ENCODE measurements at regions of chr13 and their contacts with region 1.

Region 1: GRCh38 chr13:60431108-60431700 is 34.2 kb downstream of the TDRD3 start:
- DNase-seq: no peak
- H3K4me3 Mint-ChIP-seq: no peak overlapping the region
- H3K27ac Mint-ChIP-seq: no peak overlapping the region
- H3K4me1 Mint-ChIP-seq: peaks cover 17% of the 10 kb centered on the region
- H3K27me3 Mint-ChIP-seq: no peaks in the 10 kb centered on the region

Region 2: DNA sequence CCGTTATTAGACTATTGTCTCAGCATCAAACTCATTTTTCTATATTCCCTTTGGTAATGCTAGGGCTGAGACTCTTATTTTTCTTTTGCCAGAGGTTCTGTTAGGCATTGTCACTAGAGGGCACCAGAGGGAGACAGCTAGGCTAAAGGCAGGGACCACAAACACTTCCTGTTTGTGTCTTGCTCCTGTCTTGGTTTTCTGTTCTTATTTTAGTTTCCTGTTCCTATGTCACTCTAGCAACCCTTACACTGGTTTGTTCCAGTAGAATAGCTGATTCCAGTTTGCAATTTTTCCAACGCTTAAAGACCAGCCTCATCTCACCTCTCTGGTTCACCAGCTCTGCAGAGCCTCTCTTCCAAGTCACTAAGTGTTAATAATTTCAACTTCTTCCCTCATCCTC is 1039.5 kb before region 1 on chr13:
- intact Hi-C with region 1: loop called (anchors 1 kb)
- DNase-seq: peak; percentile 49
- H3K4me3 Mint-ChIP-seq: no peak overlapping the region
- H3K27ac Mint-ChIP-seq: no peak overlapping the region
- H3K4me1 Mint-ChIP-seq: no peaks in the 10 kb centered on the region
- H3K27me3 Mint-ChIP-seq: peaks cover 6% of the 10 kb centered on the region

Region 3: DNA sequence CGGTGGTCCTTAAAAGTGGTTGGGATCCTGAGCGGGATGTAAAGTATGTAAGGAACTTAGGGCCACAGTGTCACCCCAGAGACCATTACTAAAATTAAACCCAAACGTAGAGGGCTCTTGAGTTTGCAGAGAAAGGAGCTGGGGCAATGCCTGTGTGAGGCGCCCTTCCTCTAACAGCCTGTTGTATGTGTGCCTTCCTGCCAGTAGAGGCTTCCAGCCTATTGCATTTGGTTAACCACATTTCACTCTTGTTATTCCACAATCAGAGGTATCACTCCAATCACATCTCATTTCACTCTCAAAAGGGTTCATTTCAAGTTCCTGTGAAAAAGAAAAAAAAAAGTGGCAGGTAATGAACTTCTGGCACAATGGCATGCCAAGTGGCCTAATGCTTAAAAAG is 296.8 kb before region 1 on chr13:
- intact Hi-C with region 1: loop called (anchors 1 kb)
- DNase-seq: no peak
- H3K4me3 Mint-ChIP-seq: no peak overlapping the region
- H3K27ac Mint-ChIP-seq: no peak overlapping the region
- H3K4me1 Mint-ChIP-seq: peaks cover 20% of the 10 kb centered on the region
- H3K27me3 Mint-ChIP-seq: no peaks in the 10 kb centered on the region

Region 4: GRCh38 chr13:60226507-60226906 is 204.7 kb before region 1 on chr13:
- intact Hi-C with region 1: loop called (anchors 1 kb)
- DNase-seq: no peak
- H3K4me3 Mint-ChIP-seq: no peak overlapping the region
- H3K27ac Mint-ChIP-seq: no peak overlapping the region
- H3K4me1 Mint-ChIP-seq: peaks cover 8% of the 10 kb centered on the region
- H3K27me3 Mint-ChIP-seq: peaks cover 8% of the 10 kb centered on the region

Region 5: DNA sequence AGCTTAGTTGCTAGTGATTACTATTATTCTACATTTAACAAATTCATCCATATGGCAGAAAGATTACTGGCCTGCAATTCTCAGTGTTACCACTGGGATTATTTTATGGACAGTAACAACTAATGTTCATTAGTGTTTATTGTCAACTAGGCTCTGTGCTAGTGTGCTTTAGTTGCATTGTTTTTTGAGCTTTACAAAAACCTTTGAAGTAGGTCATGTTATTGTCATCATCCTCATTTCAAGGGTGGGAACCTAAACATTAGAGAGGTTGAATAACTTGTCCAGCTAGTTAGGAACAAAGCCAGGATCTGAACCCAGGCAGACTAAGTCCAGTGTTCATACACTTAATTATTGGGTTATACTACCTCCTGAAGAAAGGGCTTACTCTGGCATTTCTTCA is 62.0 kb before region 1 on chr13:
- intact Hi-C with region 1: no loop called
- DNase-seq: no peak
- H3K4me3 Mint-ChIP-seq: no peak overlapping the region
- H3K27ac Mint-ChIP-seq: no peak overlapping the region
- H3K4me1 Mint-ChIP-seq: no peaks in the 10 kb centered on the region
- H3K27me3 Mint-ChIP-seq: peaks cover 4% of the 10 kb centered on the region

Region 6: GRCh38 chr13:60396783-60397703 is 34.2 kb before region 1 on chr13 and contains the start of gene TDRD3:
- intact Hi-C with region 1: loop called (anchors 1 kb)
- DNase-seq: peak; percentile 75
- H3K4me3 Mint-ChIP-seq: peak within 1 kb of the TSS; percentile 95
- H3K27ac Mint-ChIP-seq: peak within 1 kb of the TSS; percentile 97
- H3K4me1 Mint-ChIP-seq: peaks cover 44% of the 10 kb centered on the region
- H3K27me3 Mint-ChIP-seq: no peaks in the 10 kb centered on the region
- total RNA-seq, gene TDRD3: 19.6 and 20.7 TPM in 2 replicates